MCF 10A (cell line): ENCODE measurements at regions of chr10 and their contacts with region 1.

Region 1: DNA sequence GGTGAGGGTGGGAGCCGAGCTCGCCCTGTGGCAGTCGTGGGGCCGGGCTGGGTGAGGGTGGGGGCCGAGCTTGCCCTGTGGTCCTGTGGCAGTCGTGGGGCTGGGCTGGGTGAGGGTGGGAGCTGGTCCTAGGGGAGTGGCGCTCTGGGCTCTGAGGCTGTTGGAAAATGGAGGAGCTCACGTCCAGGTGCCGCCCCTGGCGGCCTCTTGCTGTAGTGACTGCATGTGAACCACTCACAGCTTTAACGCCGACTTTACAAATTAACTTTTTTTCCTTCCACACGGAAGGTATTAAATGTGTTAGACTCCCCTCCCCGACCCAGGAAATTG is 312.6 kb downstream of the WDR37 start:
- DNase-seq: peak; percentile 45
- H3K4me3 Mint-ChIP-seq: no peak overlapping the region
- H3K27ac Mint-ChIP-seq: no peak overlapping the region
- H3K4me1 Mint-ChIP-seq: no peaks in the 10 kb centered on the region
- H3K27me3 Mint-ChIP-seq: no peaks in the 10 kb centered on the region
- CTCF ChIP-seq: peak; percentile 59

Region 2: GRCh38 chr10:1109795-1110673 is 258.8 kb before region 1 on chr10:
- CTCF ChIA-PET with region 1: no interaction called
- POLR2A ChIA-PET with region 1: no interaction called
- intact Hi-C with region 1: loop called (anchors 2 kb)
- DNase-seq: peak; percentile 81
- H3K4me3 Mint-ChIP-seq: no peak overlapping the region
- H3K27ac Mint-ChIP-seq: peak overlapping the region; percentile 76
- H3K4me1 Mint-ChIP-seq: peaks cover 20% of the 10 kb centered on the region
- H3K27me3 Mint-ChIP-seq: no peaks in the 10 kb centered on the region
- CTCF ChIP-seq: peak; percentile 58

Region 3: DNA sequence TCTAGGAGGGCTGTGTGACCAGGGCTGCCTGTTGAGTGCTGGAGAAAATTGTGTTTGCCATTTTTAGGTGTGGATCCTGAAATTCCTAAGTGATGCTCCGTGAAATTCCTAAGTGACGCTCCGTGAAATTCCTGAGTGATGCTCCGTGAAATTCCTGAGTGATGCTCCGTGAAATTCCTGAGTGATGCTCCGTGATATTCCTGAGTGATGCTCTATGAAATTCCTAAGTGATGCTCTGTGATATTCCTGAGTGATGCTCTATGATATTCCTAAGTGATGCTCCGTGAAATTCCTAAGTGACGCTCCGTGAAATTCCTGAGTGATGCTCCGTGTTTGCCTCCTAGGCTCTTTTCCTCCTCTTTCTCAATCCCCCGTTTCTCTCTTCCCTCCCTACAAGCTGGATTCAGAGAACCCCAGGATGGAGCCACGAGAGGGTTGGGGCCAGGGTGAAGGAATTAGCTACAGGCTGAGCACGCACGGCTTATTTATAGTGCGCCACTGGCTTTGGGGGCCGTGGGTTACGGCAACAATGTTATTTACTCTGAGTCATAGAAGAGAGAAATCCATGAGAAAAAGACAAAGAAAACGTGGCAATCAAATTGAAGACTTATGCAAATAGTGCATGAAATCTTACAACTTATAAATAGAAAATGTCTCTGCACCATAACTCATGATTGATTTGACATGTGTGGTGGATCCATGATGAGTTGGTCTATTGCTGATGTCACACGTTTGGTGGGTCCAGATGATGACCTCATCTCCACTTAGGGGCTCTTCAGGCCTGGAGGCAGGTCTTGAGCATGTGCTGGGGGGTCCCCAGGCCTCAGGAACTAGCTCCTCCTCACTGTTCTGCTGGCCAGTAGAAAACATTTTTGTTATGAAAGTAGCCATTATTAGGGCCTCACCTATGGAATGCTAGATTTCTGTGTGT is 88.1 kb before region 1 on chr10:
- CTCF ChIA-PET with region 1: no interaction called
- POLR2A ChIA-PET with region 1: no interaction called
- intact Hi-C with region 1: no loop called
- DNase-seq: no peak
- H3K4me3 Mint-ChIP-seq: no peak overlapping the region
- H3K27ac Mint-ChIP-seq: no peak overlapping the region
- H3K4me1 Mint-ChIP-seq: no peaks in the 10 kb centered on the region
- H3K27me3 Mint-ChIP-seq: peaks cover 19% of the 10 kb centered on the region
- CTCF ChIP-seq: no peak